ENCODE measurements at regions of chr9 and their contacts with region 1.

Region 1: GRCh38 chr9:113436728-113437471 is 26.4 kb downstream of the C9orf43 start:
- DNase-seq: no peak
- H3K4me3 ChIP-seq: no peak overlapping the region
- H3K27ac ChIP-seq: no peak overlapping the region
- H3K4me1 ChIP-seq: no peaks in the 10 kb centered on the region
- H3K27me3 ChIP-seq: no peaks in the 10 kb centered on the region
- CTCF ChIP-seq: no peak
- EP300 ChIP-seq: no peak
- POLR2A ChIP-seq: no peak

Region 2: GRCh38 chr9:113564498-113565237 is 127.8 kb after region 1 on chr9:
- intact Hi-C with region 1: no loop called
- DNase-seq: peak; percentile 41 to 64 (median 62)
- H3K4me3 ChIP-seq: peak overlapping the region; percentile 7
- H3K27ac ChIP-seq: no peak overlapping the region
- H3K4me1 ChIP-seq: peaks cover 33% of the 10 kb centered on the region
- H3K27me3 ChIP-seq: no peaks in the 10 kb centered on the region
- CTCF ChIP-seq: no peak
- EP300 ChIP-seq: no peak
- POLR2A ChIP-seq: no peak

Region 3: GRCh38 chr9:113669522-113670115 is 232.7 kb after region 1 on chr9:
- intact Hi-C with region 1: loop called in 1 of 4 experiments (anchors 5 kb)
- DNase-seq: no peak
- H3K4me3 ChIP-seq: no peak overlapping the region
- H3K27ac ChIP-seq: no peak overlapping the region
- H3K4me1 ChIP-seq: no peaks in the 10 kb centered on the region
- H3K27me3 ChIP-seq: no peaks in the 10 kb centered on the region
- CTCF ChIP-seq: no peak
- EP300 ChIP-seq: no peak
- POLR2A ChIP-seq: no peak